Heart right ventricle (tissue), 16 donors: ENCODE measurements at regions of chr4 and their contacts with region 1.

Region 1: GRCh38 chr4:169024762-169025161 is 14.7 kb upstream of the CBR4 start:
- DNase-seq: peak in 1 of 2 donors; percentile 34
- ATAC-seq: peak; percentile 72 to 92 (median 86)
- H3K4me3 ChIP-seq: no peak overlapping the region
- H3K27ac ChIP-seq: no peak overlapping the region
- H3K4me1 ChIP-seq: peaks cover 0 to 6% (median 0%) of the 10 kb centered on the region in 9 donors
- H3K27me3 ChIP-seq: no peaks in the 10 kb centered on the region
- CTCF ChIP-seq: peak; percentile 27 to 77 (median 64)

Region 2: DNA sequence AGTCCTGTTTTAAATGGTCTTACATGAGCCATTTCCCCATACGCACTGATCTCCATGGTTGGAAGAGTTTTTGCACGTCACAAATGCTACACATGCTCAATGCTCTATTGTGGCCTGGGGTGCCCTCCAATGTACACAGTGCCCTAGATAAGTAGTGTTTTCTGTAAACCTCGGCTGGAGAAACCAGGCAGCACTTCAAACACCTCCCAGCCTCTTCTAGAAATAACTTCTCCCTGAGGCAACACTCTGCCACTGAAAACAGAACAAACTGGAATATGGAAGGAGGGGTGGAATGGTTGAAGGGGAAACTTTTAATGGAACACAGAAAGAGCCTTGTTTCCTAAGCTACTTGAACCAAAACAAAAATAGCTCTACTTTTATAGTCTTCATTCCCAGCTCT is 109.2 kb after region 1 on chr4:
- intact Hi-C with region 1: loop called in 1 of 10 experiments (anchors 10 kb)
- DNase-seq: no peak
- ATAC-seq: peak in 7 of 8 donors; percentile 35 to 85 (median 67)
- H3K4me3 ChIP-seq: no peak overlapping the region
- H3K27ac ChIP-seq: peak overlapping the region in 9 of 10 donors; percentile 16 to 51 (median 24)
- H3K4me1 ChIP-seq: peaks cover 5 to 50% (median 24%) of the 10 kb centered on the region in 9 donors
- H3K27me3 ChIP-seq: no peaks in the 10 kb centered on the region
- CTCF ChIP-seq: no peak

Region 3: GRCh38 chr4:169311643-169312365 is 287.0 kb after region 1 on chr4:
- intact Hi-C with region 1: loop called in 2 of 10 experiments (anchors 5 kb)
- DNase-seq: peak in 1 of 2 donors; percentile 55
- ATAC-seq: peak; percentile 60 to 87 (median 78)
- H3K4me3 ChIP-seq: no peak overlapping the region
- H3K27ac ChIP-seq: no peak overlapping the region
- H3K4me1 ChIP-seq: peaks cover 8 to 23% (median 19%) of the 10 kb centered on the region in 9 donors
- H3K27me3 ChIP-seq: no peaks in the 10 kb centered on the region
- CTCF ChIP-seq: peak; percentile 43 to 72 (median 66)

Region 4: GRCh38 chr4:169485791-169486742 is 461.3 kb after region 1 on chr4:
- intact Hi-C with region 1: loop called (anchors 1 to 10 kb)
- DNase-seq: peak in 1 of 2 donors; percentile 23
- ATAC-seq: peak in 4 of 8 donors; percentile 59 to 65 (median 62)
- H3K4me3 ChIP-seq: peak overlapping the region in 1 of 10 donors; percentile 20
- H3K27ac ChIP-seq: no peak overlapping the region
- H3K4me1 ChIP-seq: peaks cover 0 to 5% (median 0%) of the 10 kb centered on the region in 9 donors
- H3K27me3 ChIP-seq: no peaks in the 10 kb centered on the region
- CTCF ChIP-seq: peak in 8 of 9 donors; percentile 35 to 75 (median 65)

Region 5: GRCh38 chr4:169492438-169493163 is 467.8 kb after region 1 on chr4:
- intact Hi-C with region 1: loop called in 8 of 10 experiments (anchors 5 to 10 kb)
- DNase-seq: no peak
- ATAC-seq: peak in 4 of 8 donors; percentile 37 to 53 (median 44)
- H3K4me3 ChIP-seq: no peak overlapping the region
- H3K27ac ChIP-seq: no peak overlapping the region
- H3K4me1 ChIP-seq: no peaks in the 10 kb centered on the region
- H3K27me3 ChIP-seq: no peaks in the 10 kb centered on the region
- CTCF ChIP-seq: peak; percentile 27 to 71 (median 60)

Region 6: DNA sequence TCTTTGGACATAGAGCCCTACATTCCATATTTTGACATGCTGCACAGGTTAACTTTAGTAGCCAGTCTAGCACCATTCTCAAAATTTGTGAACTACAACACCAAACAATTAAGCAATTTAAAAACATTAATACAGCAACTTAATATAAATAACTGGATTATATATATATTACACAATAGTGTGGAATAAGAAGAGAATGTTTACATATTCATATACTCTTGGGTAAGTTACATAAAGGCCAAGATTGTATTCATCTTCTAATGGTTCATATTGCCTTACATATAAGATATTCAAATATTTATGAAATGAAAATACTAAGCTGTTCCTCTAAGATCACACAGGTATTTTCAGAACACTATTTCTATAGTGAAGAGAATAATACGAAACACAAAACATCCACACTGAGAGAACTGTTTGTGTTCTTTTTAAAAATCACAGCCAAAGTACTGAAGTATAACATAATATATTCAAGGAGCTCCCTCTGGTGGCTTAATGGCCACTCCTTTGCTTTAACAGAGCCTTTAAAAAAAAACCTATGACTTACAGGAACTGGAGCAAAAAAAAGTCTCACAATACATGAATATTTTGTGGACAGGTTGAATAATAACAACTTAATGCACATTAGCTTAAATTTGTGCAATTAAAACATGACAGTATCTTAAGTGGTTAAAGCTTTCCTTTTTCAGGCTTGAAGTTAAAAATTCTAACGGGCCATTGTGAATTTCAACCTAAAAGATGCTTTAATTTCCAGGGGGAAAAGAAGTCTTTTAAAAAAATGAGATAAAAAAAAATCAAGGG is 541.5 kb after region 1 on chr4:
- intact Hi-C with region 1: loop called in 2 of 10 experiments (anchors 10 kb)
- DNase-seq: peak in 1 of 2 donors; percentile 62
- ATAC-seq: peak in 7 of 8 donors; percentile 68 to 87 (median 81)
- H3K4me3 ChIP-seq: peak overlapping the region in 1 of 10 donors; percentile 18
- H3K27ac ChIP-seq: peak overlapping the region in 1 of 10 donors; percentile 18
- H3K4me1 ChIP-seq: peaks cover 0 to 17% (median 11%) of the 10 kb centered on the region in 9 donors
- H3K27me3 ChIP-seq: no peaks in the 10 kb centered on the region
- CTCF ChIP-seq: peak; percentile 43 to 86 (median 75)